ENCODE measurements at regions of chr14 and their contacts with region 1.

Region 1: DNA sequence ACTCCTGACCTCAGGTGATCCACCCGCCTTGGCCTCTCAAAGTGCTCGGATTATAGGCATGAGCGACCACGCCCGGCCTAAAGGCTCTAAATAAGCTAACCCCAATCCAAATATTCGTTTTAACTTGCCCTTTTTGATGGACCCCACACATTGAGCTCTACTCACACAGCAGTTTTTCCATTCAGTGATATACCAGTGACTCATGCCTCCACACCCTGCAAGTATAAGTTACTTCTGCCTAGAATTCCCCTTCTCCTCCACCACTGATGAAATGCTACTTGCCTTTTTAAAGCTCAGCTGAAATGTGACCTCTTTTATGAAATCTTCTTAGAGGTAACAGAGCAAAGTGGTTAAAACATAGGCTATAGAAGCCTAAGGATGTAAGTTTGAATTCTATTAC is 68.8 kb downstream of the EXOC5 start:
- DNase-seq: no peak
- ATAC-seq: peak; percentile 57
- H3K4me3 Mint-ChIP-seq: no peak overlapping the region
- H3K27ac Mint-ChIP-seq: no peak overlapping the region
- H3K4me1 Mint-ChIP-seq: peaks cover 3% of the 10 kb centered on the region
- H3K27me3 Mint-ChIP-seq: peaks cover 11% of the 10 kb centered on the region

Region 2: DNA sequence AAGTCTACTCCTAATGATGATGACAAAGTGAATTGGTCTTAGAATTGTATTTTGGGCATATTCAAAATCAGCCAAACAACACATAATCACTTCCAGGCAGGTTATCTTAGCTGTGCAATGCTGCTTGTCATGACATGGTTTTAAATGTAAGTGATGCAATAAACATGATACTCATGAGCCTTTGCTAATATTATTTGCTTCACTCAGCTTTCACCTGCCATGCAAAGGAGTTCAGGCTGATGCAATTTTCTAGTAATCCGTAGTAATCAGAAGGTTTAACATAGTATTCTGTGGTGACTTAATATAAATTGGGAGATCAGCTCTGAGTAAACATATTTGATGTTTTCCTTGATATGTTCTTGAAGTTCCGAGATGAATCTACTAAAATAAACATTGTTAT is 591.2 kb before region 1 on chr14:
- CTCF ChIA-PET with region 1: no interaction called
- POLR2A ChIA-PET with region 1: no interaction called
- intact Hi-C with region 1: loop called in 1 of 2 experiments (anchors 10 kb)
- DNase-seq: no peak
- ATAC-seq: no peak
- H3K4me3 Mint-ChIP-seq: no peak overlapping the region
- H3K27ac Mint-ChIP-seq: no peak overlapping the region
- H3K4me1 Mint-ChIP-seq: no peaks in the 10 kb centered on the region
- H3K27me3 Mint-ChIP-seq: no peaks in the 10 kb centered on the region